ENCODE measurements at regions of chr19 and their contacts with region 1.

Region 1: GRCh38 chr19:55605207-55605636 is 225 bp upstream of the ZNF865 start:
- DNase-seq: peak; percentile 90 to 99 (median 98)
- ATAC-seq: peak; percentile 78
- H3K4me3 ChIP-seq: peak overlapping the region; percentile 60 to 80
- H3K4me3 Mint-ChIP-seq: peak overlapping the region; percentile 86
- H3K27ac ChIP-seq: peak overlapping the region; percentile 60 to 91
- H3K27ac Mint-ChIP-seq: peak overlapping the region; percentile 90
- H3K4me1 ChIP-seq: peaks cover 24% of the 10 kb centered on the region
- H3K4me1 Mint-ChIP-seq: peaks cover 60% of the 10 kb centered on the region
- H3K27me3 ChIP-seq: no peaks in the 10 kb centered on the region
- H3K27me3 Mint-ChIP-seq: no peaks in the 10 kb centered on the region
- CTCF ChIP-seq: no peak

Region 2: GRCh38 chr19:55586976-55587668 is 18.1 kb before region 1 on chr19:
- CTCF ChIA-PET with region 1: interaction called, 8 read pairs
- POLR2A ChIA-PET with region 1: interaction called, 10 read pairs
- intact Hi-C with region 1: loop called in 1 of 2 experiments (anchors 2 kb)
- DNase-seq: peak; percentile 86 to 95 (median 92)
- ATAC-seq: peak; percentile 96
- H3K4me3 ChIP-seq: peak overlapping the region; percentile 32 to 55
- H3K4me3 Mint-ChIP-seq: peak overlapping the region; percentile 88
- H3K27ac ChIP-seq: peak overlapping the region in 1 of 2 experiments; percentile 24
- H3K27ac Mint-ChIP-seq: peak overlapping the region; percentile 45
- H3K4me1 ChIP-seq: peaks cover 25% of the 10 kb centered on the region
- H3K4me1 Mint-ChIP-seq: peaks cover 30% of the 10 kb centered on the region
- H3K27me3 ChIP-seq: no peaks in the 10 kb centered on the region
- H3K27me3 Mint-ChIP-seq: no peaks in the 10 kb centered on the region
- CTCF ChIP-seq: no peak